ENCODE measurements at regions of chr14 and their contacts with region 1.

Region 1: GRCh38 chr14:104752735-104753531 is at the start of gene SIVA1:
- DNase-seq: peak; percentile 99
- H3K4me3 ChIP-seq: peak within 1 kb of the TSS; percentile 83
- H3K4me3 Mint-ChIP-seq: peak within 1 kb of the TSS; percentile 90
- H3K27ac Mint-ChIP-seq: peak within 1 kb of the TSS; percentile 93
- H3K4me1 ChIP-seq: peaks cover 32% of the 10 kb centered on the region
- H3K4me1 Mint-ChIP-seq: peaks cover 19% of the 10 kb centered on the region
- H3K27me3 ChIP-seq: no peaks in the 10 kb centered on the region
- H3K27me3 Mint-ChIP-seq: no peaks in the 10 kb centered on the region
- CTCF ChIP-seq: no peak
- total RNA-seq, gene SIVA1: 99.3 and 105 TPM in 2 replicates

Region 2: DNA sequence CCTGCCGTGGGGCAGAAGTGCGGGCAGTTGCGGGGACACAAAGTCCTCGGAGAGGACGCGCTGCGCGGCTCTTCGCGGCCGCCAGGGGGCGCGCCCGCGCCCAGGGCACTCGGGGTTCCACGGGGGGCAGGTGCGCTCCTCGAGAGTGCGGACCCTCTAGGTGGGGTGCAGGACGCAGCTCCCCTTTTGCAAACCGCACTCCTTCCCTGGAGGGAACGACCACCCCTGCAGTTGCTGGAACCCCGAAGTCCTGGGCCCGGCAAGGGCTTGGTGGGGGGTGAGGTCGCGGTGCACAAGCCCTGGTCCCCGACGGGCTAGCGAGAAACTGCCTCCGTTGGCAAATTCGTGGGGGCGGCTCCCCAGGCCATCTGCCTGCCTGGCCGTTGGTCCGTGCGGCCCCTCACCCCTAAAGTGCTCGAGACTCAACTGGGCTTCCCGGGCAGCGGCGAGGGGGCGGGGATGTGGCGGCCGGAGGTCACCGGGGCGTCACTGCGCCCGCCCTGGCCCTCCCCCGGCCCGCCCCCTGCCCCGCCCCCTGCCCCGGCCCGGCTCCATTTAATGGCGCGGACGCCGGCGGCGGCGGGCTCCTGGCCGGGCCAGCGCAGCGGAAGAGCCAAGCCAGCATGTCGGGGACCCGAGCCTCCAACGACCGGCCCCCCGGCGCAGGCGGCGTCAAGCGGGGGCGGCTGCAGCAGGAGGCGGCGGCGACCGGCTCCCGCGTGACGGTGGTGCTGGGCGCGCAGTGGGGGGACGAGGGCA is 29.1 kb before region 1 on chr14 and contains the start of gene ADSS1:
- CTCF ChIA-PET with region 1: interaction called, 5 read pairs
- POLR2A ChIA-PET with region 1: no interaction called
- intact Hi-C with region 1: loop called (anchors 1 kb)
- DNase-seq: peak; percentile 73 to 76
- H3K4me3 ChIP-seq: peak within 1 kb of the TSS; percentile 75
- H3K4me3 Mint-ChIP-seq: peak within 1 kb of the TSS; percentile 54
- H3K27ac Mint-ChIP-seq: no peak within 1 kb of the TSS
- H3K4me1 ChIP-seq: peaks cover 12% of the 10 kb centered on the region
- H3K4me1 Mint-ChIP-seq: no peaks in the 10 kb centered on the region
- H3K27me3 ChIP-seq: no peaks in the 10 kb centered on the region
- H3K27me3 Mint-ChIP-seq: peaks cover 3% of the 10 kb centered on the region
- CTCF ChIP-seq: peak; percentile 85 to 96
- total RNA-seq, gene ADSS1: 1.6 and 3.2 TPM in 2 replicates

Region 3: DNA sequence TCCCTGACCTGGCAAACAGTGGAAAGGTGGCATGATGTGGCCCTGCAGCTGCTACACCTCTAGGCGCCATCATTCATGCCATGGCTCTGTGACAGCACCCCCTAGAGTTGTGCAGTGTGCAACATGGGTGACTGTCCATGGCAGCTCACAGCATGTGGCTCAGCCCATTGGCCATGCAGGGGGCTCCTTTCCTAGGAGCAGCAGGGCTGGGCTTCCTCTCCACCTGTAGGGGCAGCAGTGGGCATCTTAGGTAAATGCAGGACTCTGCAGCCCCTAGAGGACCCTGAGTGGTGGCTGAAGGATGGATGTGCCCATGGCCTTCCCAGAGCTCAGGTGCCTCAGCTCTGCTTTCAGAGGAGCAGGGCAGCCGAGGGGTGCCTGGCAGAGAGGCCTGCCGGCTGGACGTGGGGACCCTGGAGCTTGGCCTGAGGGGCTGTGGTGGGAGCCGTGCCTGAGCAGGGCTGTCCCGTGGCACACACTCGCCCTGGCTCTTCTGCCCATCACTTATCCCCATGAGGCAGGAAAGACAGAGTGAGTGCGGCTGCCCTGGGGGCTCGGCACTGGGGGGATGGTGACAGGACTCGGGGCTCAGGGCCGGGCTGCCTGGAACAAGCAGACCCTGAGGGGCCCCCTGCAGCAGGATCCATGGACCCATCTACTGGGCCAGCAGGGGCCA is 21.5 kb before region 1 on chr14:
- CTCF ChIA-PET with region 1: interaction called, 11 read pairs
- POLR2A ChIA-PET with region 1: interaction called, 3 read pairs
- intact Hi-C with region 1: no loop called
- DNase-seq: peak; percentile 64 to 68
- H3K4me3 ChIP-seq: no peak overlapping the region
- H3K4me3 Mint-ChIP-seq: no peak overlapping the region
- H3K27ac Mint-ChIP-seq: no peak overlapping the region
- H3K4me1 ChIP-seq: no peaks in the 10 kb centered on the region
- H3K4me1 Mint-ChIP-seq: no peaks in the 10 kb centered on the region
- H3K27me3 ChIP-seq: no peaks in the 10 kb centered on the region
- H3K27me3 Mint-ChIP-seq: peaks cover 7% of the 10 kb centered on the region
- CTCF ChIP-seq: peak; percentile 62 to 70

Region 4: DNA sequence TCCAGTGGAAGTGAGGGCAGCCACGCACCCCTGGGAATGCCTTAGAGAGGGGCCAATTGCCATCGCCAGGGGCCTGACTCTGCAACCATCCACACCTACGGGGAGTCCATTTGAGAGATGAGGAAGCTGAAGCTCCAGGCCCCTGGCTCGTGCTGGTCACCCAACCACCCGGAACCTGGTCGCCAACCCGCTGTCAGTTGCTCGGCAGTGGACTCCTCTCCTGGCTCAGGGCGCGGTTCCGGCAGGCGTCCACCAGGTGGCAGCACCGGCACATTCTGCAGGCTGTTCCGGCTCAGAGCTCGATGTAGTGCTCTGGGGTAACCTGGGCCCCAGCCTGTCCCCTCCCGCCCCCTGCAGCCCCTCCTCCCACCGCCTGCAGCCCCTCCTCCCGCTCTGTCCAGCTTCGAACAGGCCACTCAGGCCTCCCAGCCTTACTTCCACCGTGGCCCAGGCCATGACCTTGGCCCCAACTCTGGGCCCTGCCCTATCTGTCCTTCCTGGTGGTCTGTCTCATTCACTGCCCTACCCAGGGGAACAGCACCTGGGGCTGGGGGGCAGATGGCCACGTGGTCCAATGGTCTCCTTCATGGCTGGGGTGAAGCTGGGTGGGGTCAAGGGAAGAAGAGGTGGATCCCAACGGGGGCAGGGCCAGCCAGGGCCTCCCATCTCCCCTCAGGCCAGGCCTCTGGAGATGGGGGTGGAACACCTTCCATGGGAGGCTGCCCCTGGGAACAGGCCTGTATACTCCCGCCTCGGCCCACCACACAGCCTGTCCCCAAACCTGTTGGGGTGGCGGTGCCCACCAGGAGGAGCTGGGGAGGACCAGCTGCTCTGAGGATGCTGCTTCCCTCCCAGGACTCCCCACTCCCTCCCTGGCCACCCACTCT is 15.7 kb after region 1 on chr14:
- CTCF ChIA-PET with region 1: interaction called, 12 read pairs
- POLR2A ChIA-PET with region 1: interaction called, 14 read pairs
- intact Hi-C with region 1: loop called (anchors 2 kb)
- DNase-seq: peak; percentile 90 to 95
- H3K4me3 ChIP-seq: no peak overlapping the region
- H3K4me3 Mint-ChIP-seq: peak overlapping the region; percentile 31
- H3K27ac Mint-ChIP-seq: peak overlapping the region; percentile 72
- H3K4me1 ChIP-seq: peaks cover 18% of the 10 kb centered on the region
- H3K4me1 Mint-ChIP-seq: peaks cover 13% of the 10 kb centered on the region
- H3K27me3 ChIP-seq: no peaks in the 10 kb centered on the region
- H3K27me3 Mint-ChIP-seq: no peaks in the 10 kb centered on the region
- CTCF ChIP-seq: peak; percentile 90 to 93